Heart left ventricle (tissue), 16 donors: ENCODE measurements at regions of chr17 and their contacts with region 1.

Region 1: GRCh38 chr17:62724398-62725146 is 83.5 kb downstream of the MARCHF10 start:
- DNase-seq: no peak
- ATAC-seq: no peak
- H3K4me3 ChIP-seq: no peak overlapping the region
- H3K27ac ChIP-seq: peak overlapping the region in 1 of 12 donors; percentile 12
- H3K4me1 ChIP-seq: peaks cover 0 to 16% (median 0%) of the 10 kb centered on the region in 12 donors
- H3K27me3 ChIP-seq: no peaks in the 10 kb centered on the region
- CTCF ChIP-seq: no peak
- POLR2A ChIP-seq: no peak

Region 2: GRCh38 chr17:62671583-62672312 is 52.8 kb before region 1 on chr17:
- intact Hi-C with region 1: loop called in 1 of 10 experiments (anchors 5 kb)
- DNase-seq: peak in 1 of 5 donors; percentile 68
- ATAC-seq: peak in 2 of 4 donors; percentile 17 to 35
- H3K4me3 ChIP-seq: no peak overlapping the region
- H3K27ac ChIP-seq: no peak overlapping the region
- H3K4me1 ChIP-seq: peaks cover 0 to 8% (median 0%) of the 10 kb centered on the region in 12 donors
- H3K27me3 ChIP-seq: no peaks in the 10 kb centered on the region
- CTCF ChIP-seq: no peak
- POLR2A ChIP-seq: no peak

Region 3: DNA sequence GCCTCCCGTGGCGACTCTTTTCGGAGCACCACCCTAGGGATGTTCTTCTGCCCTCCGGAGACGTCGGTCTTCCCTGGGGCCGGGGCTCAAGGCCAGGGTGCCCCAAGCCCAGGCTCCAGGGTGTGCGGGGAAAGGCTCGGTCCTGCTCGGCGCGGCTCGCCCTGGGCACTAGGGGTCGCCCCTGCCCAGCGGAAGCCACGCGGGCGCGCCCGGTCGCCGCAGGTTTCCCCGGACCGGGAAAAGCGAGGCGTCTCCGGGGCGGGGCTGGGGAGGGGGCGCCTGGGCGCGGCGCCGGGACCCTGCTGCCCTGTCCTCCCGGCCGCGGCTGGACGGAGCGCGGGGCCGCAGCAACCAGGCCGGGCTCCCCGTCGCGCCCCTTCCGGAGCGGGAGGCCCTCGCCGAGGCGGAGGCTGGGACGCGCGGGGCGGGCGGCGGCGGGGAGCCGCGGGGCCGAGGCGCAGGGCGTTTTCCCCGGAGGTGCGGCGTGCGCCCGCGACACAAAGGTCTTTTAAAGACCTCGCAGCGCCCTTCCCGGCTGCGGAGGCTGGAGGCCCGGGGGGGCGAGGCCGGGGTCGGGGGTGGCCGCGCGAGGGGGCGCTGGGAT is 20.7 kb before region 1 on chr17:
- intact Hi-C with region 1: loop called in 1 of 10 experiments (anchors 1 kb)
- DNase-seq: peak; percentile 77 to 91 (median 79)
- ATAC-seq: peak; percentile 83 to 95 (median 88)
- H3K4me3 ChIP-seq: peak overlapping the region; percentile 57 to 91 (median 74)
- H3K27ac ChIP-seq: peak overlapping the region; percentile 70 to 93 (median 78)
- H3K4me1 ChIP-seq: peaks cover 0 to 36% (median 23%) of the 10 kb centered on the region in 12 donors
- H3K27me3 ChIP-seq: peaks cover 0 to 13% (median 0%) of the 10 kb centered on the region in 9 donors
- CTCF ChIP-seq: peak; percentile 69 to 93 (median 86)
- POLR2A ChIP-seq: no peak